ENCODE measurements at regions of chr21 and their contacts with region 1.

Region 1: GRCh38 chr21:42258153-42258884 is 39.4 kb downstream of the ABCG1 start:
- DNase-seq: peak; percentile 74 to 90 (median 81)
- ATAC-seq: peak; percentile 92
- H3K4me3 ChIP-seq: no peak overlapping the region
- H3K4me3 Mint-ChIP-seq: no peak overlapping the region
- H3K27ac ChIP-seq: no peak overlapping the region
- H3K27ac Mint-ChIP-seq: peak overlapping the region; percentile 65
- H3K4me1 ChIP-seq: peaks cover 20% of the 10 kb centered on the region
- H3K4me1 Mint-ChIP-seq: peaks cover 46% of the 10 kb centered on the region
- H3K27me3 ChIP-seq: no peaks in the 10 kb centered on the region
- H3K27me3 Mint-ChIP-seq: no peaks in the 10 kb centered on the region
- CTCF ChIP-seq: peak; percentile 91

Region 2: DNA sequence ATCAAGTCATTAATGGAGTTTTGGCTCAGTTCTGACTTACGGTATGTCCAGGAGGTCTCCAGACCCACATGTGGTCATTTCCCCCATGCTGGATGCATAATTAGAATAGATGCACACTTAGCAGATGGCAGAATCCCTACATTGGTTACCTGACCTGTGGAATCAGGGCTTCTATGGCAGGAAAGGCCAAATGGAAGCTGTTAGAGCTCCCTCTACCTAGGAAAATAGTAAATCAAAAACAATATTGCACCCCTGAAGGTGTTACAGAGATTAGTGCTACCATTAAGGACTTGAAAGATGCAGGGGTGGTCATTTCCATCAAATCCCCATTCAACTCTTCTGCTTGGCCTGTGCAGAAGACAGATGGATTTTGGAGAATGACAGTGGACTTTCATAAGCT is 1338.5 kb before region 1 on chr21:
- CTCF ChIA-PET with region 1: no interaction called
- POLR2A ChIA-PET with region 1: no interaction called
- intact Hi-C with region 1: no loop called
- DNase-seq: no peak
- ATAC-seq: no peak
- H3K4me3 ChIP-seq: no peak overlapping the region
- H3K4me3 Mint-ChIP-seq: no peak overlapping the region
- H3K27ac ChIP-seq: no peak overlapping the region
- H3K27ac Mint-ChIP-seq: no peak overlapping the region
- H3K4me1 ChIP-seq: no peaks in the 10 kb centered on the region
- H3K4me1 Mint-ChIP-seq: no peaks in the 10 kb centered on the region
- H3K27me3 ChIP-seq: no peaks in the 10 kb centered on the region
- H3K27me3 Mint-ChIP-seq: no peaks in the 10 kb centered on the region
- CTCF ChIP-seq: no peak

Region 3: GRCh38 chr21:42145569-42146272 is 112.6 kb before region 1 on chr21:
- CTCF ChIA-PET with region 1: interaction called, 33 read pairs
- POLR2A ChIA-PET with region 1: interaction called, 4 read pairs
- intact Hi-C with region 1: loop called (anchors 1 kb)
- DNase-seq: peak; percentile 47 to 86 (median 59)
- ATAC-seq: peak; percentile 91
- H3K4me3 ChIP-seq: no peak overlapping the region
- H3K4me3 Mint-ChIP-seq: no peak overlapping the region
- H3K27ac ChIP-seq: no peak overlapping the region
- H3K27ac Mint-ChIP-seq: no peak overlapping the region
- H3K4me1 ChIP-seq: peaks cover 7% of the 10 kb centered on the region
- H3K4me1 Mint-ChIP-seq: peaks cover 9% of the 10 kb centered on the region
- H3K27me3 ChIP-seq: no peaks in the 10 kb centered on the region
- H3K27me3 Mint-ChIP-seq: no peaks in the 10 kb centered on the region
- CTCF ChIP-seq: peak; percentile 91

Region 4: GRCh38 chr21:42187976-42188653 is 70.2 kb before region 1 on chr21:
- CTCF ChIA-PET with region 1: interaction called, 11 read pairs
- POLR2A ChIA-PET with region 1: no interaction called
- intact Hi-C with region 1: no loop called
- DNase-seq: peak; percentile 61 to 94 (median 76)
- ATAC-seq: peak; percentile 90
- H3K4me3 ChIP-seq: peak overlapping the region; percentile 21
- H3K4me3 Mint-ChIP-seq: peak overlapping the region; percentile 74
- H3K27ac ChIP-seq: peak overlapping the region; percentile 83 to 88
- H3K27ac Mint-ChIP-seq: no peak overlapping the region
- H3K4me1 ChIP-seq: peaks cover 89% of the 10 kb centered on the region
- H3K4me1 Mint-ChIP-seq: peaks cover 73% of the 10 kb centered on the region
- H3K27me3 ChIP-seq: no peaks in the 10 kb centered on the region
- H3K27me3 Mint-ChIP-seq: no peaks in the 10 kb centered on the region
- CTCF ChIP-seq: no peak

Region 5: GRCh38 chr21:42220138-42220701 is 38.1 kb before region 1 on chr21:
- CTCF ChIA-PET with region 1: interaction called, 5 read pairs
- POLR2A ChIA-PET with region 1: interaction called, 3 read pairs
- intact Hi-C with region 1: loop called (anchors 2 to 5 kb)
- DNase-seq: peak; percentile 49 to 96 (median 73)
- ATAC-seq: peak; percentile 87
- H3K4me3 ChIP-seq: peak overlapping the region; percentile 91
- H3K4me3 Mint-ChIP-seq: peak overlapping the region; percentile 93
- H3K27ac ChIP-seq: peak overlapping the region; percentile 88 to 90
- H3K27ac Mint-ChIP-seq: peak overlapping the region; percentile 91
- H3K4me1 ChIP-seq: peaks cover 35% of the 10 kb centered on the region
- H3K4me1 Mint-ChIP-seq: peaks cover 41% of the 10 kb centered on the region
- H3K27me3 ChIP-seq: no peaks in the 10 kb centered on the region
- H3K27me3 Mint-ChIP-seq: no peaks in the 10 kb centered on the region
- CTCF ChIP-seq: no peak

Region 6: DNA sequence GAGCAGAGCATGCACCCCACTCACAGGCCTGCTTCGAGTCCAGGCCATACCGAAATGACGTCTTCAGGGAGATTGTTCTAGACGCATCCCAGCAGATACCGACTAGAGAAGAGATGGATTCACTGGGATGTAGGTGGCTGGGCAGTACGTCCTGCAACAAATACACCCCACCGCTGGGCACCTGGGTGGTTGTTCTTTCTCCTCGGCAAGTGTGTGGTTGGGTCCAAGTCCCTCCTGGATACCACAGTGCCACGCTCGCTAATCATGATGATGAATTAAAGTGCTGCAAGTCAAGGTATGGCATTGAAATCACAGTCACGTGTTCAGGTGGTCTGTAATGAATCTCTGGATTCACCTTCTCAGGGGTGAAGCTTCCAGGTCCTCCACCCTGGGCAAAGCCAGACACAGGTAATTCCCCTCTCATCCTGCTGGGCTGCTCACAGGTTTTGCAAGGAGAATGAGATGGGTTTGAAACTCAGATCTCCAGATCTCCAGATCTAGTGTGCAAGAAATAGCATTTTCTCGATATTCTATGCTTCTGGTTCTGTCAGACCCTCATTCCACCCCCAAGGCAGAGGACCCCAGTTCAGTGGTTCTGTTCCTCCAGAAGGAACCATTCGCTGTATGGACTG is 191.1 kb after region 1 on chr21:
- CTCF ChIA-PET with region 1: no interaction called
- POLR2A ChIA-PET with region 1: no interaction called
- intact Hi-C with region 1: loop called in 1 of 2 experiments (anchors 2 kb)
- DNase-seq: no peak
- ATAC-seq: no peak
- H3K4me3 ChIP-seq: no peak overlapping the region
- H3K4me3 Mint-ChIP-seq: no peak overlapping the region
- H3K27ac ChIP-seq: peak overlapping the region; percentile 4 to 14
- H3K27ac Mint-ChIP-seq: peak overlapping the region; percentile 95
- H3K4me1 ChIP-seq: peaks cover 26% of the 10 kb centered on the region
- H3K4me1 Mint-ChIP-seq: peaks cover 41% of the 10 kb centered on the region
- H3K27me3 ChIP-seq: no peaks in the 10 kb centered on the region
- H3K27me3 Mint-ChIP-seq: no peaks in the 10 kb centered on the region
- CTCF ChIP-seq: no peak

Region 7: DNA sequence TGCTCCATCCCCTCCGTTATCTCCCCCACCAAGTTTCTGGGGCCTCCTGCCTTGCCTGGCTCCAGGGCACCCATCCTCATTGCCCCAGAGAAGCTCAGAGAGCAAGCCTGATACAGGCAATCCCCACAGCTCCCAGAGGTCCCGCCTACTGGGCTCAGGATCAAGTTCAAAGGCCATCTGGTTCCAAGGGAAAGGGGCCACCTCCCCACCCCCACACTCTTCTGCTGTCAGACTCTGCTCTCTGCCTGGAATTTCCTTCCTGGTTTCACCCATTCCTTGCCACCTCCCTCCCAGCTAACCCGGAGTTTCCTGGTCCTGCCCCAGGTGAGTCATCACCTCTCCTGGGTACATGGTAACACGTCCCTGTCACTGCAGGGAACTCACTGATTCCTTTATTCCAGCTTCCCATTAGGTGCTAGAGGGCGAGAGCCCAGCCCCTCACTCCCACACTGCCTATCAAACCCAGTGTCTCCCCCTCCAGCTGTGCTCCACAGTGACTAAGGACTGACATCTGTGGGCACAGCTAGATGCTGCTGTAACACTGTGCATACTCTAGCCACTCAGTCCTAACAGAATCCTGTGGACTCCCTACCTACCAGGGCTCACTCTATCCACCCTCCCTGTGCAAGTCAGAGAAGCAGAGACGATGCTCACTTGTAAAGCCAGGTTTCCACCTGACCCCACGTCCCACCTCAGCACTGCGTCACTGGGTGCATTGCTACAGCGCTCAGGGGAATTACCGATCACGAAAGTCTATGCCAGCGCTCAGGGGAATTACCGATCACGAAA is 215.9 kb after region 1 on chr21:
- CTCF ChIA-PET with region 1: no interaction called
- POLR2A ChIA-PET with region 1: no interaction called
- intact Hi-C with region 1: no loop called
- DNase-seq: peak in 2 of 14 experiments; percentile 14 to 51
- ATAC-seq: peak; percentile 59
- H3K4me3 ChIP-seq: no peak overlapping the region
- H3K4me3 Mint-ChIP-seq: no peak overlapping the region
- H3K27ac ChIP-seq: no peak overlapping the region
- H3K27ac Mint-ChIP-seq: no peak overlapping the region
- H3K4me1 ChIP-seq: no peaks in the 10 kb centered on the region
- H3K4me1 Mint-ChIP-seq: no peaks in the 10 kb centered on the region
- H3K27me3 ChIP-seq: no peaks in the 10 kb centered on the region
- H3K27me3 Mint-ChIP-seq: no peaks in the 10 kb centered on the region
- CTCF ChIP-seq: no peak